Endothelial cell of umbilical vein (primary cell): ENCODE measurements at regions of chr5 and their contacts with region 1.

Region 1: GRCh38 chr5:172770675-172771438 is at the start of gene DUSP1:
- DNase-seq: peak; percentile 98
- H3K4me3 ChIP-seq: peak within 1 kb of the TSS; percentile 60 to 96 (median 88)
- H3K27ac ChIP-seq: peak within 1 kb of the TSS; percentile 99
- H3K4me1 ChIP-seq: peaks cover 47% of the 10 kb centered on the region
- H3K27me3 ChIP-seq: no peaks in the 10 kb centered on the region
- CTCF ChIP-seq: peak; percentile 54 to 61
- POLR2A ChIP-seq: peak; percentile 99
- total RNA-seq, gene DUSP1: 36.1 and 46.5 TPM in 2 replicates

Region 2: DNA sequence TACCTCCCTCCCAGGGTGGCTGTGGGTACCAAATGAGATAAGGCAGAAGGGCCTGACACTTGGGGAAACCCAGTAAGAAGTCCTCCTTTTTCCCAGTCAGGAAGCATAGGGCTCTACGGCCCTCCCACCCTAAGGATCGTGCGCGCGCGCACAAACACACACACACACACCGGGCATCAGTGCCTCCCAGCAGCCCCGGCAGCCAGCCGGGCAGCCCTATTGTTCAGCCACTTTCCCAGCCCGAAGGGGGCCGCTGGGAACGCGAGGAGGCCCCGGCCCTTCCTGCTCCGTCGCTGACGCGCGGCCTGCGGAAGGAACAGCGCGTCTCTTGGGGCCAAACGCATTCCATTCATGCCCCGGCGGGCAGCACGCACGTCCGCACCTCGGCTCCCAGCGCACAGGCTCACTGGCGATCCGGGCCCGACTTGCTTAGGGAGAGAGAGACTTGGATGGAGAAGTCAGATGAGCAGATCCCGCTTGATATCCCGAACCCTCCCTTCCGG is 22.5 kb before region 1 on chr5:
- CTCF ChIA-PET with region 1: no interaction called
- POLR2A ChIA-PET with region 1: interaction called, 4 read pairs
- dilution Hi-C with region 1: no loop called
- intact Hi-C with region 1: loop called (anchors 1 kb)
- DNase-seq: peak; percentile 96
- H3K4me3 ChIP-seq: no peak overlapping the region
- H3K27ac ChIP-seq: peak overlapping the region; percentile 79
- H3K4me1 ChIP-seq: peaks cover 13% of the 10 kb centered on the region
- H3K27me3 ChIP-seq: no peaks in the 10 kb centered on the region
- CTCF ChIP-seq: no peak
- POLR2A ChIP-seq: peak; percentile 52

Region 3: GRCh38 chr5:172806897-172807672 is 36.2 kb after region 1 on chr5:
- CTCF ChIA-PET with region 1: interaction called, 4 read pairs
- POLR2A ChIA-PET with region 1: interaction called, 7 read pairs
- dilution Hi-C with region 1: no loop called
- intact Hi-C with region 1: loop called (anchors 1 kb)
- DNase-seq: peak; percentile 86
- H3K4me3 ChIP-seq: peak overlapping the region in 1 of 3 experiments; percentile 41
- H3K27ac ChIP-seq: peak overlapping the region; percentile 95
- H3K4me1 ChIP-seq: peaks cover 15% of the 10 kb centered on the region
- H3K27me3 ChIP-seq: no peaks in the 10 kb centered on the region
- CTCF ChIP-seq: no peak
- POLR2A ChIP-seq: peak; percentile 68

Region 4: DNA sequence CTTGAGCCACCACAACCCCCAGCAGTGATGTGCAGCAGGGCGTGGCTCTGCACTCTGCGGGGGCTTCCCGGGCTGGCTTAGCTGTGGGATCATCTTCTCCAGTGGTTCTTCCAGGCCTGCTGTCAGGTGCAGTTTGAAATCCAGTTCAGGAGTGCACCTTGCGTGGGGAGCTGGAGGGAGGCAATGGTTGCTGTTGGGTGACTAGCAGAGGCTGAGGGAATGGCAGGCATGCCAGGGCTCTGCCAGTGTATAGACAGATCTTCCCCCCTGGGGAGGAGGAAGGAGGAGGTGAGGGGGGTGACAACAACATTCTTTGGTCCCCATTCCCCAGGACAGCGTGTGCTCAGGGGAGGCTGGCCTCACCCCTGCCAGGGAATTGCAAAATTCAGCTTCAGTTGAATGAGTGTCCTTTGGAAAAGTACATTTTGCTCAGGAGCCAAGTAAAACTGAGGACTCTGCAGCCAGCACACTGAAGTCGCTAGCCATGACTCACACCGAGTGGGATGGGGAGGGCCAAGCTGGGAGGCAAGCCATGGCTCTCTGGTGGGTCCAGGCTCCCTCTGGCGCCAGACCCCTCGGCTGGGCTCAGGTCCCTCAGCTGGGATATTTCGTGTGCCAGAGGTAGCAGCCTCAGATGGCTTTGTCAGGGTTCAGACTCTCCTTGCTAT is 98.2 kb after region 1 on chr5:
- CTCF ChIA-PET with region 1: interaction called, 85 read pairs
- POLR2A ChIA-PET with region 1: interaction called, 40 read pairs
- dilution Hi-C with region 1: no loop called
- intact Hi-C with region 1: loop called (anchors 1 kb)
- DNase-seq: peak; percentile 92
- H3K4me3 ChIP-seq: no peak overlapping the region
- H3K27ac ChIP-seq: peak overlapping the region; percentile 94
- H3K4me1 ChIP-seq: peaks cover 62% of the 10 kb centered on the region
- H3K27me3 ChIP-seq: no peaks in the 10 kb centered on the region
- CTCF ChIP-seq: peak; percentile 38 to 60
- POLR2A ChIP-seq: peak; percentile 51

Region 5: GRCh38 chr5:172897481-172898217 is 126.8 kb after region 1 on chr5:
- CTCF ChIA-PET with region 1: interaction called, 31 read pairs
- POLR2A ChIA-PET with region 1: interaction called, 7 read pairs
- dilution Hi-C with region 1: no loop called
- intact Hi-C with region 1: loop called (anchors 1 kb)
- DNase-seq: peak; percentile 91
- H3K4me3 ChIP-seq: no peak overlapping the region
- H3K27ac ChIP-seq: peak overlapping the region; percentile 87
- H3K4me1 ChIP-seq: peaks cover 41% of the 10 kb centered on the region
- H3K27me3 ChIP-seq: no peaks in the 10 kb centered on the region
- CTCF ChIP-seq: no peak
- POLR2A ChIP-seq: peak; percentile 52

Region 6: DNA sequence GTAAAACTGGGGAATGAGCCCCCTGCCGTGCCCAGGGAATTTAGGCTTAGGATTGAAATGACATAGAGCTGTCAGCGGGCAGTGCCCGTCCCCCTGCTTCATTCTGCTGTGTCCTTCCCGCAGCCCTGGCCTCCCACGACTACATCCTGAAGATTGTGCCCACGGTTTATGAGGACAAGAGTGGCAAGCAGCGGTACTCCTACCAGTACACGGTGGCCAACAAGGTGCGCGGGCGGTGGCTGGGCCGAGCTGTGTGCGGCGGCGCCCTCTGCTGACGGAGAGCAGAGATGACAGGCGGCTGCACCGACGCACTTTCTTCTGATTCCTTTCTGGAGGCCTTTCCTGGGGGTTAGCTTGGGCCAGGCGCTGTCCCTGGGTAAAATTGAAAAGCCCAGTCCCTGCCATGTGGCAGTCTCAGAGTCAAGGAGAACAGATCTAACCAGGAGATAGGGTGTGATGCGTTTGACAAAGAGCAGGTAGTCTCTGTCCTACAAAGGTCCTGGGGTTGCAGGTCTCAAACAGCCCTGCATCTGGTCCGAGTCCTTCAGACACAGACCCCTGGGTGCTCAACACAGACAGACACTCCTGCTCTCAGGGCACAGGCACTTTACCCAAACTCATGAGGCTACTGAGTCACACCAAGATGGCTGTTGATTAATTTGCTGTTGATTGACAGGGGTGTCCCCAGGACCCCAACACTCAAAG is 161.6 kb after region 1 on chr5:
- CTCF ChIA-PET with region 1: interaction called, 67 read pairs
- POLR2A ChIA-PET with region 1: interaction called, 21 read pairs
- dilution Hi-C with region 1: no loop called
- intact Hi-C with region 1: loop called (anchors 1 kb)
- DNase-seq: peak; percentile 65
- H3K4me3 ChIP-seq: no peak overlapping the region
- H3K27ac ChIP-seq: peak overlapping the region; percentile 74
- H3K4me1 ChIP-seq: peaks cover 31% of the 10 kb centered on the region
- H3K27me3 ChIP-seq: no peaks in the 10 kb centered on the region
- CTCF ChIP-seq: peak; percentile 96 to 97
- POLR2A ChIP-seq: no peak

Region 7: GRCh38 chr5:173764321-173765029 is 993.6 kb after region 1 on chr5:
- CTCF ChIA-PET with region 1: no interaction called
- POLR2A ChIA-PET with region 1: no interaction called
- dilution Hi-C with region 1: no loop called
- intact Hi-C with region 1: loop called (anchors 10 kb)
- DNase-seq: peak; percentile 92
- H3K4me3 ChIP-seq: peak overlapping the region in 1 of 3 experiments; percentile 20
- H3K27ac ChIP-seq: peak overlapping the region; percentile 91
- H3K4me1 ChIP-seq: peaks cover 27% of the 10 kb centered on the region
- H3K27me3 ChIP-seq: no peaks in the 10 kb centered on the region
- CTCF ChIP-seq: no peak
- POLR2A ChIP-seq: no peak